ENCODE measurements at regions of chr6 and their contacts with region 1.

Region 1: GRCh38 chr6:135535989-135536414 is 38.5 kb upstream of the AHI1 start:
- DNase-seq: no peak
- H3K4me3 Mint-ChIP-seq: no peak overlapping the region
- H3K27ac Mint-ChIP-seq: peak overlapping the region; percentile 67
- H3K4me1 Mint-ChIP-seq: peaks cover 49% of the 10 kb centered on the region
- H3K27me3 Mint-ChIP-seq: no peaks in the 10 kb centered on the region

Region 2: DNA sequence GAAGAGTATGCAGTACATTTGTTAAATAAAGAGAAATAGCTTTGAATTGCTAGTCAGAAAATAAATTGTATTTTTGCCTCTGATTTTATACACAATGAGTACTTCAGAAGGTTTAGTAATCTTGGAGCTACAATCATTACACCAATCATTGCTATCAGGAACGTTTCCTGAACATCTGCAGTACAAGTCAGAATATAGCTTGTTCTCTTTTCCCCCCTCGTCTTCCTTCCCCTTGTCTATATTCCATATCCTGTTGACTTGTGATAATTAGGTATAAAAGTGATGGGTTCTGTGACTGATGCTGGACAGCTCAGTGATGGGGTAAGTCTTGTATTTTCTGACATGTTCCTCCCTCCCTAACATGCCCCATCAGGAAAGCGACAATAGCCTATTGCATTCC is 132.4 kb before region 1 on chr6:
- CTCF ChIA-PET with region 1: no interaction called
- POLR2A ChIA-PET with region 1: no interaction called
- DNase-seq: no peak
- H3K4me3 Mint-ChIP-seq: no peak overlapping the region
- H3K27ac Mint-ChIP-seq: no peak overlapping the region
- H3K4me1 Mint-ChIP-seq: no peaks in the 10 kb centered on the region
- H3K27me3 Mint-ChIP-seq: no peaks in the 10 kb centered on the region

Region 3: GRCh38 chr6:135451693-135452092 is 84.3 kb before region 1 on chr6:
- CTCF ChIA-PET with region 1: interaction called, 15 read pairs
- POLR2A ChIA-PET with region 1: no interaction called
- DNase-seq: no peak
- H3K4me3 Mint-ChIP-seq: no peak overlapping the region
- H3K27ac Mint-ChIP-seq: no peak overlapping the region
- H3K4me1 Mint-ChIP-seq: peaks cover 7% of the 10 kb centered on the region
- H3K27me3 Mint-ChIP-seq: no peaks in the 10 kb centered on the region

Region 4: GRCh38 chr6:135506270-135506997 is 29.6 kb before region 1 on chr6:
- CTCF ChIA-PET with region 1: interaction called, 17 read pairs
- POLR2A ChIA-PET with region 1: no interaction called
- DNase-seq: no peak
- H3K4me3 Mint-ChIP-seq: no peak overlapping the region
- H3K27ac Mint-ChIP-seq: peak overlapping the region; percentile 12
- H3K4me1 Mint-ChIP-seq: peaks cover 7% of the 10 kb centered on the region
- H3K27me3 Mint-ChIP-seq: peaks cover 1% of the 10 kb centered on the region

Region 5: DNA sequence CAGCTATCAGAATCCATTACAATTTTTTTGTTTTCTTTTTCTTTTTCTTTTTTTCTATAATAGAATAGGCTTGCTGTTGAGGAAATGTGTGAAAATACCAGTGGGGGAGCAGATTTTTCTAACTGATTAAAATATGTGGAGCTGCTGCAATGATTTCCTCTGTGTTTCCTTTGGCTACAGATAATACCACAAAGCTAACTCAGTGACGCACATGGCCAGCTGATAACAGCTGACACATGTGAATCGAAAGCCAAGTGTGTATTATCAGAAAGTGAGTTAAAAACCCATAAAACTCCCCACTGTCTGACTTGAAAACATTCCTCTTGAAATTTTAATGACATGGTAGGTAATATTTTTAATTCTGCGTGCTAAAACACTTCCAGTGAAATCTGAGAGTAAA is 32.4 kb after region 1 on chr6:
- CTCF ChIA-PET with region 1: interaction called, 4 read pairs
- POLR2A ChIA-PET with region 1: interaction called, 10 read pairs
- DNase-seq: peak; percentile 74
- H3K4me3 Mint-ChIP-seq: peak overlapping the region; percentile 9
- H3K27ac Mint-ChIP-seq: peak overlapping the region; percentile 73
- H3K4me1 Mint-ChIP-seq: peaks cover 53% of the 10 kb centered on the region
- H3K27me3 Mint-ChIP-seq: peaks cover 13% of the 10 kb centered on the region

Region 6: DNA sequence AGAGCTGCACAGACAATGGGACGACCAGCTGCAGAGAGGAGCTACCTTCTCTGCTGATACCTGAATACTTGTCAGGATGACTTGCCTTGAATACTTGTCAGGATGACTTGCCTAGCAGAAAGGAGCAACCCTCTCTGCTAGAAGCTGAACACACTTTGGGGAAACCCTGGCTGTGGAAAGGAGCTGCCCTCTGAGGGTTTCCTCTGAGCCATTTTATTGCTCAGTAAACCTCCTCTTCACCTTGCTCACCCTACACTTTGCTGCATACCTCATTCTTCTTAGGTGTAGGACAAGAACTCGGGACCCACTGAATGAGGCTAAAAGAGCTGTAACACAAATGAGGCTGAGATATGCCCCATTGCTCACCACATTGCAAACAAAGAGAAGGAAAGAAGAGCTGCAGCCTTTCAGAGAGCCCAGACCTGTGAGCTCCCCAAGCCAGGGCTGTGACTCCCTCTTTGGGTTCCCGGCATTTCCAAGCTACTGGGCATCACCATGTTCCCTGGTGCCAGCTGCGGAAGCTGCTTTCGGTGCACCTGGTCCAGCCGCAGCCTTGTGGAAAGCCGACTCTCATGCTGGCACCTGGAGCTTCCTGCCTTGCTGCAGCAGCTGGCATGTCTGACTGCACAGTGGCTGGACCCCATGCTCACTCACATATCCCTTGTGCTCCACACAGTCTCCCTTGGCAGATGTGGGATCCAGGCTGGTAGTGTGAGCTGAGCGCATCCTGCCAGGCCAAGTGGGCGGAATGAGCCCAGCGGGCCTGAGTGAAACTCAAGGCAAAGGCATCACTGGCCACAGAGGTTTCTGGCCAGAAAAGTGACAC is 68.2 kb after region 1 on chr6:
- CTCF ChIA-PET with region 1: no interaction called
- POLR2A ChIA-PET with region 1: no interaction called
- DNase-seq: no peak
- H3K4me3 Mint-ChIP-seq: no peak overlapping the region
- H3K27ac Mint-ChIP-seq: no peak overlapping the region
- H3K4me1 Mint-ChIP-seq: peaks cover 6% of the 10 kb centered on the region
- H3K27me3 Mint-ChIP-seq: peaks cover 12% of the 10 kb centered on the region

Region 7: DNA sequence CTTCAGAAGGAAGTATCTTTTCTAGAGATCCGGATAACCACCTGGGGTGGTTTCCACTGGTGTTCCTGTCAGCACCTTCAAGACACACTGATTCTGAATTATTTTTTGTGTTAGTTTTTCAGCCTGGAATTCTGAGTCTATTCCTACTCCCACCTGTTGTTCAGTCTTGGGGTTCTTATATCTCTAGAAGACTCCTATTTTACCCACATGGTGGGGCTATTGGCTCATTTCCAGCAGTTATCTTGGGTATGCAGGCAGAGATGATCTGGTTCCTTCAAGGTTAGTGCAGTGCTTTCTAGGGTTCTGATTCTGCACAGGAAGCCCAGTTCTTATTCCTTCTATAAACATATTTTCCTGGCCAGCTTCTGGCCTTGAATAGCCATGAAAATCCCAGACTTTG is 139.9 kb after region 1 on chr6:
- CTCF ChIA-PET with region 1: interaction called, 24 read pairs
- POLR2A ChIA-PET with region 1: no interaction called
- DNase-seq: peak; percentile 30
- H3K4me3 Mint-ChIP-seq: no peak overlapping the region
- H3K27ac Mint-ChIP-seq: no peak overlapping the region
- H3K4me1 Mint-ChIP-seq: peaks cover 23% of the 10 kb centered on the region
- H3K27me3 Mint-ChIP-seq: peaks cover 4% of the 10 kb centered on the region

Region 8: GRCh38 chr6:135722679-135723078 is 186.7 kb after region 1 on chr6:
- CTCF ChIA-PET with region 1: no interaction called
- POLR2A ChIA-PET with region 1: no interaction called
- DNase-seq: no peak
- H3K4me3 Mint-ChIP-seq: no peak overlapping the region
- H3K27ac Mint-ChIP-seq: no peak overlapping the region
- H3K4me1 Mint-ChIP-seq: no peaks in the 10 kb centered on the region
- H3K27me3 Mint-ChIP-seq: peaks cover 10% of the 10 kb centered on the region

Region 9: DNA sequence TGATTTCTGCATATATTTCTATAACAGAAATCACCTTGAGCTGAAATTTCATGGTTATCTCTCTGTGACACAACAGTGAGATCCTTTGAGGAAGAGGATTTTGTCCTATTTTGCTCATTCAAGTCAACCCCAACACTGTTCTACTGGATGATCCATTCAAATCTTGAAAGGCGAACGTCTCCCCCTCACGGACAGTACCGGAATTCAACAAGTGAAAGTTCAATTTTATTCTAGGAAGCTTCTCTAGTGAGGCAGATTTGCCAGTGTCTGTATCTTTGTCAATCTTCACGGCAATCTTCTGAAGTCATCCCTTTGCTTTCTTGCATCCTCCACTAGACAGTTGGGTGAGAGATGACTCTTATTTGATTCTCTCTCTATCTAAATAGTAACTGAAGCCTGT is 223.8 kb after region 1 on chr6:
- CTCF ChIA-PET with region 1: interaction called, 11 read pairs
- POLR2A ChIA-PET with region 1: no interaction called
- DNase-seq: no peak
- H3K4me3 Mint-ChIP-seq: no peak overlapping the region
- H3K27ac Mint-ChIP-seq: no peak overlapping the region
- H3K4me1 Mint-ChIP-seq: peaks cover 2% of the 10 kb centered on the region
- H3K27me3 Mint-ChIP-seq: no peaks in the 10 kb centered on the region